Right cardiac atrium (tissue), 5 donors: ENCODE measurements at regions of chr5 and their contacts with region 1.

Region 1: GRCh38 chr5:68215208-68215897 is at the start of gene PIK3R1:
- DNase-seq: peak; percentile 96 to 99 (median 99)
- ATAC-seq: peak; percentile 97 to 98
- H3K4me3 ChIP-seq: peak within 1 kb of the TSS; percentile 80
- H3K27ac ChIP-seq: peak within 1 kb of the TSS; percentile 96
- H3K4me1 ChIP-seq: peaks cover 5% of the 10 kb centered on the region
- H3K27me3 ChIP-seq: no peaks in the 10 kb centered on the region
- total RNA-seq, gene PIK3R1: 64.9 to 170 (median 116) TPM

Region 2: GRCh38 chr5:68033961-68034571 is 181.3 kb before region 1 on chr5:
- intact Hi-C with region 1: loop called in 1 of 4 experiments (anchors 10 kb)
- DNase-seq: peak; percentile 52 to 88 (median 70)
- ATAC-seq: peak; percentile 55 to 56
- H3K4me3 ChIP-seq: no peak overlapping the region
- H3K27ac ChIP-seq: no peak overlapping the region
- H3K4me1 ChIP-seq: peaks cover 2% of the 10 kb centered on the region
- H3K27me3 ChIP-seq: no peaks in the 10 kb centered on the region

Region 3: DNA sequence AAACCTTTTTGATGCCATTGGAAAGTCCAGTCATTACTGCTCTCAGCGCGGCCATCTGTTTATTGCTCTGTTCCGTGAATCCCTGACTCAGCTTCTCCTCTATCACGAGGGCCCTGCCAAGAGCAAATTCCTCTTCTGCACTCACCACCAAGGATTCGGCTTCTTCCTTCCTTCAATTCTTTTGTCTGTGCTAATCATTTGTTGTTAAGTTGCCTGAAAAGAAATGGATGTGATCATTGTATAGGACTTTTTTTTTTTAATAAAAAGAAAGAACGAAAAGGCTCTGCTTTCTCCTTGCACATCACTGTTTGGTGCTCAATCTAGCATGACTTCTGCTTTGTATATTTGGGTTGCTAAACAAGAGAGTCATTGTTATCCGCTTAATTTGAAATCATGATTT is 128.5 kb before region 1 on chr5:
- intact Hi-C with region 1: loop called in 1 of 4 experiments (anchors 10 kb)
- DNase-seq: peak in 2 of 3 donors; percentile 32 to 62
- ATAC-seq: peak; percentile 64 to 70
- H3K4me3 ChIP-seq: no peak overlapping the region
- H3K27ac ChIP-seq: no peak overlapping the region
- H3K4me1 ChIP-seq: peaks cover 2% of the 10 kb centered on the region
- H3K27me3 ChIP-seq: no peaks in the 10 kb centered on the region

Region 4: DNA sequence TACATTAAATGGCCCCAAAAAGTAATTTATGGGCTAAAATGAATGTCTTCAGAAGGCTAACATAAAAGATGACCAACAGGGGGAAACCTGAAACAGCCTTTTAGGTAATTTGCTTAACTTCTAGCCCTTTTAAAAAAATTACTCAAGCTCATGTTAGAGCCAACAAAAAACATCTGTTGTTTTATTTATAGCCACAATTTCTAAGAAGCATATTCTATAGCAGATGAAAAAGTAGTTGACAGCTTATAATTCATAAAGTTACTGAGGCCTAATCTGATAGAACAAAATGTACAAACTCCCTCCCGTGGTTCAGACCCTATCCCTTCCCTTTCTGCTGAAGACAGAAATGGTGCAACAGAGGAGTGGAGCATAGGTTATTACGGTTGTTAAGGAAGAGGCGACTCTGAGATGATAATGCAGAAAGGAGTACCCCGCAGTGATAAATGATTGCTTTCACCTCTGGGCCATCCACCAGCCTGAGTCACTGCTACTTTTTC is 46.3 kb after region 1 on chr5:
- intact Hi-C with region 1: loop called in 1 of 4 experiments (anchors 10 kb)
- DNase-seq: no peak
- ATAC-seq: peak in 1 of 2 donors; percentile 12
- H3K4me3 ChIP-seq: no peak overlapping the region
- H3K27ac ChIP-seq: peak overlapping the region; percentile 47
- H3K4me1 ChIP-seq: peaks cover 25% of the 10 kb centered on the region
- H3K27me3 ChIP-seq: no peaks in the 10 kb centered on the region